Motor neuron (in vitro differentiated cells): ENCODE measurements at regions of chr2 and their contacts with region 1.

Region 1: DNA sequence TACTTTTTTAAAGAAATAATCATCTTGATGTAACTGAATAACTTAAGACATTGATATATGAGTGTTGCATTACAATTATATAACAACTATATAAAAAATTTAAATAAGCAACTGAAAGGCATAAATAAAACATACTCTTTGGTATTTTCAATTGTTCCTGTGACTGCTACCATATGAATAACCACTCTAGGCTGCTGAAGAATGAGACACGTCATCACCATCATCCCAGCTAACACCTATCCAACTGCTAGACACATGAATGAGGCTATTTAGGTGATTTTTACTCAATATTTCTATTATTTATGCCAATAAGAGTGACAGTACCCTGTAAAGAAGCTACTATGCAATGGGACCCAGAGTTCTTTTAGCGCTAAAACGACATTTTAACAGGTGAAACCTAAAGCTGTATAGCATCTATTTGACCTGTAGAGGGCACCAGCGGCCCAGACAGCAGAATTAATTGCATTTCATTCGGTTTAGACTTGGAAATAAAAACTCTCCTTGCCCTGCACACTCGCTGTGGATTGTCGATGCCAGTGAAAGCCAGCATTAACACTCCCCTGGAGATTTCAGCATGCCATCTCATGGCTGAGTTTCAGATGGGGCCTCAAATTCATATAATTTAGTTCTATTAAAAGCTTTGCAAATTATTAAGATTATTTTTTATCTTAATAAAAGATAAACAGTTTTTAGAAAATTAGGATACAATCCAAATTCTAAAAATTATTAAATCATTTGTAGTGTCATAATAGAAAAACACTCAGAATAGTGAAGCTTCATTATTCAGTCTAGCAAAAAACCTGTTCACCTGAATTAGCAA is 89.4 kb upstream of the MAP2 start:
- ATAC-seq: peak; percentile 49 to 80 (median 62)
- H3K4me3 ChIP-seq: no peak overlapping the region
- H3K27ac ChIP-seq: no peak overlapping the region
- H3K4me1 ChIP-seq: peaks cover 0 to 2% of the 10 kb centered on the region in 2 donors

Region 2: GRCh38 chr2:209074711-209075110 is 259.7 kb before region 1 on chr2:
- in situ Hi-C with region 1: no loop called
- ATAC-seq: no peak
- H3K4me3 ChIP-seq: no peak overlapping the region
- H3K27ac ChIP-seq: no peak overlapping the region
- H3K4me1 ChIP-seq: no peaks in the 10 kb centered on the region

Region 3: DNA sequence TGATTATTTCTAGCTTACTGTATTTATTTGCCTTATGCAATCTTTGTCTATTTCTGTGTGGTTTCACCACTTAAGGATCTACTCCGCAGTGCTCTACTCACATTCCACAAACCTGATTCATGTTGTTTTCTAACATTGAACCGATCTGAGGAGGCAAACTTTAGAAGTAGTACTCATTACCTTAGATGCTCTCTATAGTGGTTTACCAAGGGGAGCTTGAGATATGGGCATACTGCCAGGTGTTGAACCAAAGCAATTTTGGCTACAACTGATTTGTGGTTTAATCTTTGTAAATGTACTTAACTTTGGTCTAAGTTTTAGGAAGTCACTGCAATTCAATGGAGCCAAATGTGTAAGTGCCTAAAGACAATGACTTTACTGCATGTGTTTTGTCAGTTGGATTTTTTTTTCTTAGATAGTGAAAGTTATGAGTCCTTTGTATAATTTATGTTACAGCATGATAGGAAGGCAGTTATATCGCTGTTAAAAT is 139.6 kb after region 1 on chr2:
- in situ Hi-C with region 1: no loop called
- ATAC-seq: peak in 2 of 8 experiments; percentile 46 to 57
- H3K4me3 ChIP-seq: no peak overlapping the region
- H3K27ac ChIP-seq: no peak overlapping the region
- H3K4me1 ChIP-seq: peaks cover 9 to 51% of the 10 kb centered on the region in 2 donors

Region 4: DNA sequence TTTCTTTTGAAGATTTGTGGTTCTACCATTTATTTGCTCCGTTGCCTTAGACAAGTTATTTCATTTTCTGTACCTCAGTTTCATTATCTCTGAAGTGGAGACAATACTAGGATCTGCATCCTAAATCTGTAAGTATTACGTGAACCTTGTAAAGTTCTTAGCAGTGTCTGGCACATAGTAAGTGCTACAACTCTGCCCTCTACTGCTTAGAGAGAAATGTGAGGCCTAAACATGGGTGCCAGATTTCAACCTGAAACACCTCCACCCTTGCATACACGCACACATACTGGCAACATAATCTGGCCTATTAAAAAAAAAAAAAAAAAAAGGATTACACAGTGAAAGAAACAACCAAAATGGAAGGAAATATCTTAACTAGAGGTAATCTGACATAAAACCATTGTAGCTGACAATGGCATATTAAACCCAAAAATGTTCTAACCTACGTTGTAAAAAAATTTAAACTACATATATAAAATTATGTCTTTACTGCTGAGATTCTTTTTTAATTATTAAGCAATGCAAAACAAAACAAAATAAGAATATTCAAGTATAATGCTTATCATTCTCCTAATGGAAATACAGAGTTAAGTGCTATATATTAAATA is 222.1 kb after region 1 on chr2:
- in situ Hi-C with region 1: loop called in 1 of 9 experiments (anchors 25 kb)
- ATAC-seq: peak in 4 of 8 experiments; percentile 40 to 79 (median 67)
- H3K4me3 ChIP-seq: no peak overlapping the region
- H3K27ac ChIP-seq: no peak overlapping the region
- H3K4me1 ChIP-seq: no peaks in the 10 kb centered on the region

Region 5: DNA sequence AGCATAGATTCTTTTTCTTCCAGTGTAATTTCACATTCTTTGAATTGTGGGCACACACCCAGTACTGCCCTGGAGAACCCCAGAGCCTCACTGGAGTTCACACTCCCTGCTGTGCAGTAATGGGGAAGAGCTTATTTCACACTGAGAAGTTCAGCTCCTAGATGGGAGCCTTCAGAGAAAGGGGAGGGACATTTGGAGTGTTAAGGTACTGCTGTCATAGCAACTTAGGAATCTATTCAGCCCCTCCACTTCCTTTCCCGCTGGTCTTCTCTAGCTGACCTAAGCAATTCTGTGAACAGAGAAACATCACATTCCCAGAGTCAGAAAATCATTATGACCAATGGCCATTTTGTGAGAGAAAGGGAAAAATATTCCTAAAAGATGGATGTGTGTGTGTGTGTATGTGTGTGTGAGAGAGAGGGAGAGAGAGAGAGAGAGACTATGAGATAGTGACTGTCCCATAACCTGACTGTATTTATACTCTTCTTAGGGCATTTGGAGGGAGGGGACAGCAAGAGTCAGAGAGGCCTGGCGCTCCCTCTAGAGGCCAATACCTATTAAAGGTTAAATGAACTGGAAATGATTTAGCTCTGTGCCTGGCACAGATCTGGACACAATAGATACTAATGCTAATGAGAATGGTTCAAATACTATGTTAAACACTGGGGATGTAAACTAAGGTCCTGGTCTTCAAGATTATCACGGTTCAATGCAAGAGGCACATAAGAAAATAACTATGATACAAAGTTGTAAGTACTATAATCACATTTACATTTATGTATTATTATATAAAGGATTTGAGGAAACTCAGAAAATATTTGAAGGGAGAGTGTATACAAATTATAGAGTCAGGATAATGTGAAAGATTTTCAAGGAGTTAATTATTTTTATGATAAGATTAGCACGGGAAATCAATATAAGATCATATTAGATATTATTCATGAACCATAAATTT is 626.5 kb after region 1 on chr2:
- in situ Hi-C with region 1: loop called in 1 of 9 experiments (anchors 25 kb)
- ATAC-seq: peak; percentile 88 to 97 (median 93)
- H3K4me3 ChIP-seq: no peak overlapping the region
- H3K27ac ChIP-seq: peak overlapping the region; percentile 21 to 53
- H3K4me1 ChIP-seq: peaks cover 22 to 36% of the 10 kb centered on the region in 2 donors